Vagina (tissue), 2 donors: ENCODE measurements at regions of chr19 and their contacts with region 1.

Region 1: GRCh38 chr19:32691291-32691951 is at the start of gene NUDT19:
- DNase-seq: no peak
- H3K4me3 ChIP-seq: peak within 1 kb of the TSS; percentile 54 to 70
- H3K27ac ChIP-seq: peak within 1 kb of the TSS; percentile 69
- H3K4me1 ChIP-seq: peaks cover 56% of the 10 kb centered on the region
- H3K27me3 ChIP-seq: no peaks in the 10 kb centered on the region
- CTCF ChIP-seq: no peak
- POLR2A ChIP-seq: peak in 1 of 2 donors; percentile 35
- total RNA-seq, gene NUDT19: 12.5 TPM

Region 2: GRCh38 chr19:32735936-32736335 is 44.5 kb after region 1 on chr19:
- intact Hi-C with region 1: no loop called
- DNase-seq: no peak
- H3K4me3 ChIP-seq: no peak overlapping the region
- H3K27ac ChIP-seq: no peak overlapping the region
- H3K4me1 ChIP-seq: no peaks in the 10 kb centered on the region
- H3K27me3 ChIP-seq: no peaks in the 10 kb centered on the region
- CTCF ChIP-seq: no peak
- POLR2A ChIP-seq: no peak

Region 3: DNA sequence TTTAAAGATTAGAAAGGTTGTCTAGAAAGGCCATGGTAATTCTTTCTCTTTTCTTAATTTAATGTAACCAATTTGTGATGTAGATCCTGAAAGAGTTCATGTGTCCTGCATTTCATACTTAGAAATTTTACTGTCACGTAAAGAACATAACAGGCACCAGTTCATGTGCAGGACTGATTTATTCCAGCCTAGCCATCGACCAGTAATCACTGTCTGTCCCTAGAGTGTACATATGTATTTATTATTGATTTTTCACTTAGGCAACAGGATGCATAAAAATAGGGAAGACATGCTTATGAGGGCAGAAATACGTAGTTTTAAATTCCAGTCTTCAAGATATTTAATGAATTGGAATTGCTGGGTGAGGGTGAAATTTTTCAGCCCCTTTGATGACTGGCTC is 65.8 kb after region 1 on chr19:
- intact Hi-C with region 1: no loop called
- DNase-seq: no peak
- H3K4me3 ChIP-seq: no peak overlapping the region
- H3K27ac ChIP-seq: no peak overlapping the region
- H3K4me1 ChIP-seq: no peaks in the 10 kb centered on the region
- H3K27me3 ChIP-seq: no peaks in the 10 kb centered on the region
- CTCF ChIP-seq: no peak
- POLR2A ChIP-seq: no peak

Region 4: GRCh38 chr19:33486936-33487811 is 795.8 kb after region 1 on chr19:
- intact Hi-C with region 1: loop called (anchors 5 kb)
- DNase-seq: no peak
- H3K4me3 ChIP-seq: no peak overlapping the region
- H3K27ac ChIP-seq: no peak overlapping the region
- H3K4me1 ChIP-seq: no peaks in the 10 kb centered on the region
- H3K27me3 ChIP-seq: no peaks in the 10 kb centered on the region
- CTCF ChIP-seq: no peak
- POLR2A ChIP-seq: no peak